ENCODE measurements at regions of chr17 and their contacts with region 1.

Region 1: DNA sequence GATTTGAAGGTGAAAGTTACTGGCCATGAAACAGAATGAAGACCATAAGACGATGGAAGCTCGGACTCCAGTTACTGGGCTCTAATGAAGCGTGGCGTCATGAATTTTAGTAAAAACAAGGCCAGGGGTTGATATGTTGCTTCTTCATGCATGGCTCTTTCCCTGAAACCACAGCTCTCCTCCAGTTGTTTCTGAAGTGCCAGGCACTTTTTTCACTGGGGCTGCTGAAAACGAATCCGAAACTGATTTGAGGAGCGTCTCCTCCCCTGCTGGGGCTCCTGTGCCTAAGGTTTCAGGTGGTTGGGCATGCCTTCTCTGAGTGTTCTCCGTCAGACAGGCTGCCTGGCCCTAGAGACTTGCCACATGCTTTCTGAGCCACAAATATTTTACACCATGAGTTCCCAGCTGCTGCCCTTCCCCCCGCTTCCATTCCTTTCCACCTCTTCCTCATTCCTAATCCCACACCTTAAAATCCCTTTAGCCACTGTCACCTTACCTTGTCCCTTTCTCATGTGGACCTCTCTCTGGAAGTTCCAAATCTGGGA is 3.7 kb upstream of the MYL4 start:
- DNase-seq: peak in 8 of 9 donors; percentile 53 to 74 (median 66)
- ATAC-seq: peak; percentile 87
- H3K4me3 ChIP-seq: peak overlapping the region; percentile 30
- H3K4me3 Mint-ChIP-seq: peak overlapping the region; percentile 56 to 85 (median 79)
- H3K27ac ChIP-seq: peak overlapping the region; percentile 80
- H3K27ac Mint-ChIP-seq: peak overlapping the region; percentile 87 to 94 (median 93)
- H3K4me1 ChIP-seq: peaks cover 30 to 36% of the 10 kb centered on the region in 2 donors
- H3K4me1 Mint-ChIP-seq: peaks cover 29 to 59% (median 51%) of the 10 kb centered on the region in 7 donors
- H3K27me3 ChIP-seq: no peaks in the 10 kb centered on the region
- H3K27me3 Mint-ChIP-seq: no peaks in the 10 kb centered on the region

Region 2: GRCh38 chr17:47119746-47120520 is 85.6 kb before region 1 on chr17:
- CTCF ChIA-PET with region 1: no interaction called
- POLR2A ChIA-PET with region 1: no interaction called
- intact Hi-C with region 1: no loop called
- DNase-seq: no peak
- ATAC-seq: no peak
- H3K4me3 ChIP-seq: no peak overlapping the region
- H3K4me3 Mint-ChIP-seq: no peak overlapping the region
- H3K27ac ChIP-seq: no peak overlapping the region
- H3K27ac Mint-ChIP-seq: peak overlapping the region in 2 of 9 donors; percentile 3 to 64
- H3K4me1 ChIP-seq: no peaks in the 10 kb centered on the region
- H3K4me1 Mint-ChIP-seq: no peaks in the 10 kb centered on the region
- H3K27me3 ChIP-seq: no peaks in the 10 kb centered on the region
- H3K27me3 Mint-ChIP-seq: no peaks in the 10 kb centered on the region

Region 3: DNA sequence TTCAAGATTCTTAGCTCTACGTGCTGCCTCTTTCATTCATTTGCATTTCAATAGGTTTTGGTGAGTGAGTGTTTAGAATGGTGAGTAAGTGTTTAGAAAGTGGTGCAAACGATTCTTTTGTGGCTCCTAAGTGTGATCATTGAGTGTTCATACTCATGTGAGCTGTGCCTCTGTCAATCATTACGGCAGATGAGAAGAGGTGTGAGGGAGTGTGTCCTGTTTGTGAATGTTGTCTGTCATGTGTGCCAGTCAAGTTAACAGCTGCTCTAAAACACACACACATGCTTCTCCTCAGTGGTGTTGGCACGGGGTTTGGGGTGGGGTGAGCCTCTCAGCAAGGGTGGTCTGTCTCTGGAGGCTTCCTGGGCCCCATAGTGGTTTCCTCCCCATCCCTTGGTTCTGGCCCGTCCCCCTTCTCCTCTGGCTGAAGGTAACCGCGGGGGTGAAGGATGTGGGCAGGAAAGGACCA is 15.1 kb after region 1 on chr17:
- CTCF ChIA-PET with region 1: no interaction called
- POLR2A ChIA-PET with region 1: interaction called, 9 read pairs
- intact Hi-C with region 1: loop called in 1 of 2 experiments (anchors 1 kb)
- DNase-seq: no peak
- ATAC-seq: peak; percentile 71
- H3K4me3 ChIP-seq: no peak overlapping the region
- H3K4me3 Mint-ChIP-seq: peak overlapping the region in 1 of 10 donors; percentile 44
- H3K27ac ChIP-seq: no peak overlapping the region
- H3K27ac Mint-ChIP-seq: peak overlapping the region in 4 of 9 donors; percentile 3 to 87 (median 48)
- H3K4me1 ChIP-seq: peaks cover 19 to 46% of the 10 kb centered on the region in 2 donors
- H3K4me1 Mint-ChIP-seq: peaks cover 11 to 43% (median 22%) of the 10 kb centered on the region in 7 donors
- H3K27me3 ChIP-seq: no peaks in the 10 kb centered on the region
- H3K27me3 Mint-ChIP-seq: peaks cover 0 to 4% (median 0%) of the 10 kb centered on the region in 5 donors

Region 4: DNA sequence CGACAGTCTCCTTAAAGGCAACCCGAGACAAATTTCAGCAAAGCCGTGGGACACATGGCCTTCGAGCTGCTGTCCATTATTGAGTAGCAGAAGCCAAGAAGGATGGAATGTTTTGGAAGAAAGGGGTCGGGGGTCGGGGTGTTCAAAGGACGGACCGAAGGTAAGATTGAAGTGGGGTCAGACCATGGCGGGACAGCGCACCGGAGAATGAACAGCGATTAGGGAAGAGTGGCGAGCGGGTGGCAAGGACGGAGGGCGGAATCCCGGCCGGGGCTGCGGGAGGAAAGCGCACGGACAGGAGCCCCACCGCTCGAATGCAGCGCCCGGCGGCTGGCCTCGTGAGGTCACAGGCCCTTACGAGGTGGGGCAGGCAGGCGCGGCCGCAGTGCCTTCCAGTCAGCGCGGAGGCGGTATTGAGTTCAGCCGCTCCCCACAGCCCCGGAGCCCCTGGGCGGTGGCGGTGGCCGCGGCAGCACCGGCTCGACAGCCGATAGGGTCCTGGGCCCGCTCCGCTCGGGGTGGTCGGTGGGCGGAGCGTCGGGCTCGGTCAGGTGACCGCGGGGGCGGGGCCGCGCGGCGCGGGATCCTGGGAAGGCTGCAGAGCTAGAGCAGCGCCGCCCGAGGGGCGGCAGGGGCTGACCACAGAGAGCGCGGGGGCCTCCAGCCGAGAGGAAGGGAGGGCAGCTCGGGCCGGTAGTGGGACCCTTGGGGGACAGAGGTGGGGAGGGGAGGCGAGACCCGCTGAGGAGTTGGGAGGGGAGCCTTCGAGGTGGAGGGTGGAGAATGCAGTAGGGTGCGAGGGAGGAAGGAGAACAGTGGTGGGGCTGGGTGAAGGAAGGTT is 118.1 kb after region 1 on chr17 and contains the start of gene EFCAB13:
- CTCF ChIA-PET with region 1: no interaction called
- POLR2A ChIA-PET with region 1: interaction called, 4 read pairs
- intact Hi-C with region 1: loop called in 1 of 2 experiments (anchors 1 kb)
- DNase-seq: peak; percentile 55 to 84 (median 73)
- ATAC-seq: peak; percentile 91
- H3K4me3 ChIP-seq: peak within 1 kb of the TSS; percentile 93
- H3K4me3 Mint-ChIP-seq: peak within 1 kb of the TSS; percentile 92 to 100 (median 98)
- H3K27ac ChIP-seq: peak within 1 kb of the TSS; percentile 76
- H3K27ac Mint-ChIP-seq: peak within 1 kb of the TSS; percentile 91 to 99 (median 98)
- H3K4me1 ChIP-seq: peaks cover 0 to 3% of the 10 kb centered on the region in 2 donors
- H3K4me1 Mint-ChIP-seq: peaks cover 13 to 26% (median 22%) of the 10 kb centered on the region in 7 donors
- H3K27me3 ChIP-seq: no peaks in the 10 kb centered on the region
- H3K27me3 Mint-ChIP-seq: peaks cover 0 to 28% (median 0%) of the 10 kb centered on the region in 5 donors
- total RNA-seq, gene EFCAB13: 3.7 to 37.4 (median 19.9) TPM